BJ (cell line): ENCODE measurements at regions of chr1 and their contacts with region 1.

Region 1: DNA sequence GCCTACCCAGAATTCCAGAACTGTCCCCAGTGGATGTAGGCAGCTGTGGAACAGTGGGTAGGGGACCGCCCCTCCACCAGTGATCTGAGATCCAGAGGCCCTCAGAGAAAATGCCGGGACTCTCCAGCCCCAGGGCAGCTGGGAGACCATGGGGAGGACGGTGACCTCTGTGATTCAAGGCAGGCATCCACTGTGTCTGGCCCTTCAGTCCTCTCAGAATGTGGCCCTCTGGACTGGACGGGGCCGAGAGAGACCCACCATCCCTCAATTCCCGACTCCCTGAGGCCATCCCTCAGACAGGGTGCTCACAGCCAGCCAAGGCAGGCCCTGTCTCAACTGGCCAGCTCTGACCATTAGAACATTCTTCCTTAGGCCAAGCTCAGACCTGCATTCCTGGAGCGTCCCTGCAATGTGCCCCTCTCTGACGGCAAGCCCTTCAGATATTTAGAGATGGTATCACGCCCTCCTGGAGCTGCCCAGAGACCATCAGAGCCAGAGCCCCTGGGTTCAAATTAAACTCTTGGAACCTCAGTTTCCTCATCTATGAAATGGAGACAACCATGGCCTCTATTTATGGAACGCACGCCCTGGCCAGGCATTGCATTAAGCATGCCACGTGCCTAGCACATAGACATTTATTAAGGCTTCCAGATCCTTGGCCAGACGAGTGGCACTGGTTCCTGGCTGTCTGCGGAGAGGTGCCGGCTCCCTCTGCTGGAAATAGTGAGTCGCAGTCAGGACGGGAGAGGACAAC is 9.6 kb upstream of the EPS8L3 start:
- DNase-seq: no peak
- H3K4me3 ChIP-seq: no peak overlapping the region
- H3K27me3 ChIP-seq: no peaks in the 10 kb centered on the region; the same call in 1 of the 2 replicates
- CTCF ChIP-seq: peak; percentile 91

Region 2: DNA sequence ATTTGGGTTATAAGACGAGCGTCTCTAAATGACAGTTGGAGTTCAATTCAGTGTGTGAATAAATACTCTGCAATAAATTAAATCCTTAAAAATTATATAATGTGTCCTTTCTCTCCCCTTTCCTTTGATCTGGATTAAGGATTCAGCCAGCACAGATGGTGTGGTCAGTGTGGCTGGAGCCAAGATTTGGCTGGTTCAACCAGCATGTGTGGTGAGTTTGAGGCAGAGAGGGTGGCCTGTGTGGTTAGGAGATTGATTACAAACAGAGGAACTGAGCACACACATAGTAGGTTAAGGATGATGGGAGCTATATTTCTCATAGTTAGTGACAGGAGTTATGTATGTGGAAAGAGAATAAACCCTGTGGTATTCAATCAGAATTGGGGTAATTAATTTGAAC is 249.6 kb before region 1 on chr1:
- CTCF ChIA-PET with region 1: no interaction called
- POLR2A ChIA-PET with region 1: interaction called, 15 read pairs
- DNase-seq: no peak
- H3K4me3 ChIP-seq: no peak overlapping the region
- H3K27me3 ChIP-seq: no peaks in the 10 kb centered on the region
- CTCF ChIP-seq: no peak

Region 3: DNA sequence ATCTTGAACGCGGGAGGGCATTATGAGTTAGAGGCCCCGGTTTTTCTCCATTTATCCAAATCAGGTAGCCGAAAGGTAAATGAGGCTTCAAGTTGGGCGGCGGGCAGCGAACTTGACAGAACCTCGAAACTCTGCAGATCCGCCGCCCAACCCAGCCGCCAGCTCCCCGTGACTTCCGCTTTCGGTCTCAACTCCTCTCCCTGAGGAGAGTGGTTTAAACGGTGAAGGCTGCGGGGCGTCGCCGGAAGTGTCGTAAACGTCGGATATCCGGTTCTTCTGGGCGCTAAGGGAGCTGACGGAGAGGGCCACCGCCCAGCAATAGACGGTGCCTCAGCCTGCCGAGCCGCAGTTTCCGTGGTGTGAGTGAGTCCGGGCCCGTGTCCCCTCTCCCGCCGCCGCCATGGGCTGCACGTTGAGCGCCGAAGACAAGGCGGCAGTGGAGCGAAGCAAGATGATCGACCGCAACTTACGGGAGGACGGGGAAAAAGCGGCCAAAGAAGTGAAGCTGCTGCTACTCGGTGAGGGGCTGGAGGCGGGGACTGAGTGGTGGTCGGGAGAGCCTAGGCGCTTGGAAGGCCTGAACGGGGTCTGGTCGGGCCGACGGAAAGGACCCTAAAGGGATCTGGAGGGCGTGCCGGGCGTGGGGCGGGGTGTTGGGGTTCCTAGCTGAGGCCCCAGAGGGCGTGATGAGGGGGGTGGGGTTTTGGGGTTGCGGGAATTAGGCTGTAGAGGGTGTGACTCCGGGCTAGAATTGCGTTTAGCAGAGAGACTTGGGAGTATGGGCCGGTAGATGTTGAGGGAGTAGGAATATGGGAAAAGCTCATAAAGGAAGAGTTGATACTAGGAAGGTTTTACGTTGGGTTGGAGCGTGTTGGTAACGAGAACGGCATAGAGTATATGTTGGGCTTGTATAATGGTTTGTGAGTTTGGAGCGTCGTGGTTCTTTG is 224.7 kb before region 1 on chr1 and contains the start of gene GNAI3:
- CTCF ChIA-PET with region 1: interaction called, 173 read pairs
- POLR2A ChIA-PET with region 1: no interaction called
- DNase-seq: peak; percentile 70
- H3K4me3 ChIP-seq: peak within 1 kb of the TSS; percentile 98
- H3K27me3 ChIP-seq: no peaks in the 10 kb centered on the region
- CTCF ChIP-seq: no peak
- polyA plus RNA-seq, gene GNAI3: 4.7 and 9.6 TPM in 2 replicates

Region 4: GRCh38 chr1:109649491-109649914 is 123.8 kb before region 1 on chr1:
- CTCF ChIA-PET with region 1: interaction called, 82 read pairs
- POLR2A ChIA-PET with region 1: no interaction called
- DNase-seq: no peak
- H3K4me3 ChIP-seq: peak overlapping the region; percentile 34
- H3K27me3 ChIP-seq: peaks cover 2% of the 10 kb centered on the region; the same call in 1 of the 2 replicates
- CTCF ChIP-seq: peak; percentile 60

Region 5: GRCh38 chr1:109677459-109677858 is 95.9 kb before region 1 on chr1:
- CTCF ChIA-PET with region 1: no interaction called
- POLR2A ChIA-PET with region 1: no interaction called
- DNase-seq: no peak
- H3K4me3 ChIP-seq: no peak overlapping the region
- H3K27me3 ChIP-seq: no peaks in the 10 kb centered on the region
- CTCF ChIP-seq: no peak

Region 6: GRCh38 chr1:109790735-109791494 is 17.6 kb after region 1 on chr1:
- CTCF ChIA-PET with region 1: interaction called, 69 read pairs
- POLR2A ChIA-PET with region 1: no interaction called
- DNase-seq: no peak
- H3K4me3 ChIP-seq: no peak overlapping the region
- H3K27me3 ChIP-seq: no peaks in the 10 kb centered on the region
- CTCF ChIP-seq: peak; percentile 26

Region 7: DNA sequence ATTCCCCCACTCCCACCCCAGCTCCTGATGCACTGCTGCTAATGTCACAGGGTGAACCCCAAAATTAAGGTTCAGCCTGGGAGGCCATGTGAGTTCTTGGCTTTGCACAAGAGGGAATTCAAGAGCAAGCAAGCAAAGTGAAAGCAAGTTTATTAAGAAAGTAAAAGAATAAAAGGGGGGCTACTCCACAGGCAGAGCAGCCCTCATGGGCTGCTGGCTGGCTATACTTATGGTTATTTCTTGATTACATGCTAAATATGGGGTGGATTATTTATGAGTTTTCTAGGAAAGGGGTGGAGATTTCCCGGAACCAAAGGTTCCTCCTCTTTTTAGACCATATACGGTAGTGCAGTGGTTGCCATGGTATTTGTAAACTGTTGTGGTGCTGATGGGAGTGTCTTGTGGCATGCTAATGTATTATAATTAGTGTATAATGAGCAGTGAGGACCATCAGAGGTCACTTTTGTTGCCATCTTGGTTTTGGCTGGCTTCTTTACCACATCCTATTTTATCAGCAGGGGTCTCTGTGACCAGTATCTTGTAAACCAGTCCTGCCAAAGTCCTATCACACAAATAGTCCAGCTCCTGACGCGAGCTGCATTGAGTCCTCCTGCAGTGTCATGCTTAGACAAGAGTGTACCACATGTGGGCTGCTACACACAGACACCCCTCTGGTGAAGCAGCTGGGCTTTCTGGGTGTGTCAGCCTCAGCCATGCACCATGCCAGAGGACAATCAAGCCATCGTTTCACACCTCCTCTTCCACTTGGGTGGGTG is 90.9 kb after region 1 on chr1:
- CTCF ChIA-PET with region 1: no interaction called
- POLR2A ChIA-PET with region 1: no interaction called
- DNase-seq: no peak
- H3K4me3 ChIP-seq: no peak overlapping the region
- H3K27me3 ChIP-seq: no peaks in the 10 kb centered on the region
- CTCF ChIP-seq: no peak

Region 8: GRCh38 chr1:110011527-110012041 is 238.3 kb after region 1 on chr1:
- CTCF ChIA-PET with region 1: interaction called, 61 read pairs
- POLR2A ChIA-PET with region 1: no interaction called
- DNase-seq: no peak
- H3K4me3 ChIP-seq: no peak overlapping the region
- H3K27me3 ChIP-seq: no peaks in the 10 kb centered on the region
- CTCF ChIP-seq: peak; percentile 69

Region 9: DNA sequence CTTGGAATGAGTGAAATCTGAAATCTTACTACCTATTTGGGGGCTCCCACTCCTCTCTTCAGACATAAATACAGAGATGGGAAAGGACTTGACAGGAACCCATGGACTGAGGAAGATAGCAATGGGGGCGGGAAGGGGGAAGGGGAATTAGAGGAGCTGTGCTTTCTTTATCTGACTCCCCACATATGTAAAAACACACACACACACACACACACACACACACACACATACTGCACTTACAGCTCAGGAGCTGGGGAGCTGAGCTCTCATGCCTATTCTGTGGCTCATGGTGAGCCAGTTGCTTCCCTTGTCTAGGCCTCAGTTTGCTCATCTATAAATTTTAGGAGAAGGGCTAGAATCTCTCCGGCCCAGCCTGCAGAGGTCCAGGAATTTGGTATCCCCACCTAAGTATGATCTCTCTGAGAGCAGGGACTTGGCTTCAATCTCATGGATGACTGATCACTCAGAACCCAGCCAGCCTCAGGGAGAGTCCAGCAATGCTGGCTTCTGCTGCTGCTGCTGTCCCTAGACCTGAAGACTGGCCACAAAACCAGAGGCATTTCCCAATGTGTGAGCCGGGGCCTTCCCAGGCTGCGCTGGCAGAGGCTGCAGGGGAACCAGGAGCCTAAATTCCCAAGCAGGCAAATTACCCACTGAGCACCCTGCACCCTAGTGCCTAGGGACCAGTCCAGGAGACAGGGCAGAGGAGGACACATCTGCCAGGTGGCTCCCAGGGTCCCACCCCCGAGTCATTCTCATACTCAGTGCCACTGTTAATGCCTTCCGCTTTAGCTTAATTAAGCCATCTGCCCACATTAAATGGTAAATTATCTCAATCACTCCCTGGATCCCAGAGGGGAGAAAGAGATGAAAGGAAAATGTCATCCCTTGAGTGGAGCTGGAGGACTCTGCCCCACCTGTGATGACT is 508.3 kb after region 1 on chr1:
- CTCF ChIA-PET with region 1: no interaction called
- POLR2A ChIA-PET with region 1: no interaction called
- DNase-seq: no peak
- H3K4me3 ChIP-seq: no peak overlapping the region
- H3K27me3 ChIP-seq: peaks cover 1% of the 10 kb centered on the region
- CTCF ChIP-seq: no peak